Calu3 (cell line): ENCODE measurements at regions of chr11 and their contacts with region 1.

Region 1: DNA sequence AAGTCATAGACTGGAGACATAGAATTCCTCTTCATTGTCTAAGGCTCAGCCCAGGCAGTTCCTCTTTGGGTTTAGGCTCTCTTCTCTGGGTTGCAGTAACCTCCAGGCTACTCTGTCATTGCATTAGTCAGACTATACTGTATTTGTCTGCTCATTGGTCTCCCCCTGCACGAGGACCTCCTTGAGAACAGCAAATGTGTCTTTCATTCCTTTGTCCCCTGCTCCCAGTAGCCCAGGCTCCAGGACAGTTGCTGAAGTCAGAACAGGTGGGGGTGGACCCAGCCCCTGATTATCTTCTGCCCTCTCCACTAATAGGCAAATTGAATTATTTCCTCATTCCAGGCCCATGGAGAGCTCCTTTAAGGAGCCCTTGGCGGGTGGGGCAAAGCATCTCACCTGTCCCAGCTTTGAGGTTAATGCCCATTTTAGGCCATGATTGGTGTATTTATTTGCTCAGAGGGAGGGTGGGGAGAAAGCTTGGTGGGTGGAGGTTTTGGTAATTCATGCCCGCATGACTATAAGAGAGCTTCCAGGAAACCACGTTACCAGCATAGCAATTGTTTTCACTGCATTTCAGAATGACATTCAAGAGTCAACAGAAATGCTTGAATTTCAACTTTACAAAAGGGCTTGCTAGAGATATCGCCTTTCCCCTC is 40.9 kb downstream of the NAV2 start:
- DNase-seq: peak; percentile 68
- H3K4me3 Mint-ChIP-seq: no peak overlapping the region
- H3K27ac Mint-ChIP-seq: peak overlapping the region; percentile 60
- H3K4me1 Mint-ChIP-seq: peaks cover 18% of the 10 kb centered on the region
- H3K27me3 Mint-ChIP-seq: peaks cover 14% of the 10 kb centered on the region
- CTCF ChIP-seq: no peak

Region 2: GRCh38 chr11:19553683-19554333 is 199.8 kb before region 1 on chr11:
- CTCF ChIA-PET with region 1: no interaction called
- intact Hi-C with region 1: no loop called
- DNase-seq: peak; percentile 86
- H3K4me3 Mint-ChIP-seq: no peak overlapping the region
- H3K27ac Mint-ChIP-seq: no peak overlapping the region
- H3K4me1 Mint-ChIP-seq: peaks cover 8% of the 10 kb centered on the region
- H3K27me3 Mint-ChIP-seq: peaks cover 70% of the 10 kb centered on the region
- CTCF ChIP-seq: peak; percentile 78

Region 3: GRCh38 chr11:19766206-19766605 is 12.6 kb after region 1 on chr11:
- CTCF ChIA-PET with region 1: no interaction called
- intact Hi-C with region 1: no loop called
- DNase-seq: no peak
- H3K4me3 Mint-ChIP-seq: no peak overlapping the region
- H3K27ac Mint-ChIP-seq: no peak overlapping the region
- H3K4me1 Mint-ChIP-seq: no peaks in the 10 kb centered on the region
- H3K27me3 Mint-ChIP-seq: peaks cover 23% of the 10 kb centered on the region
- CTCF ChIP-seq: no peak

Region 4: GRCh38 chr11:19777377-19778102 is 24.0 kb after region 1 on chr11:
- CTCF ChIA-PET with region 1: interaction called, 4 read pairs
- intact Hi-C with region 1: loop called (anchors 2 kb)
- DNase-seq: peak; percentile 45
- H3K4me3 Mint-ChIP-seq: peak overlapping the region; percentile 72
- H3K27ac Mint-ChIP-seq: peak overlapping the region; percentile 4
- H3K4me1 Mint-ChIP-seq: peaks cover 38% of the 10 kb centered on the region
- H3K27me3 Mint-ChIP-seq: no peaks in the 10 kb centered on the region
- CTCF ChIP-seq: no peak